ENCODE measurements at regions of chr15 and their contacts with region 1.

Region 1: GRCh38 chr15:74460871-74461846 is at the start of gene UBL7:
- DNase-seq: peak; percentile 99
- H3K4me3 Mint-ChIP-seq: peak within 1 kb of the TSS; percentile 94
- H3K27ac Mint-ChIP-seq: peak within 1 kb of the TSS; percentile 97
- H3K4me1 Mint-ChIP-seq: peaks cover 46% of the 10 kb centered on the region
- H3K27me3 Mint-ChIP-seq: no peaks in the 10 kb centered on the region
- total RNA-seq, gene UBL7: 43.0 to 47.0 TPM

Region 2: DNA sequence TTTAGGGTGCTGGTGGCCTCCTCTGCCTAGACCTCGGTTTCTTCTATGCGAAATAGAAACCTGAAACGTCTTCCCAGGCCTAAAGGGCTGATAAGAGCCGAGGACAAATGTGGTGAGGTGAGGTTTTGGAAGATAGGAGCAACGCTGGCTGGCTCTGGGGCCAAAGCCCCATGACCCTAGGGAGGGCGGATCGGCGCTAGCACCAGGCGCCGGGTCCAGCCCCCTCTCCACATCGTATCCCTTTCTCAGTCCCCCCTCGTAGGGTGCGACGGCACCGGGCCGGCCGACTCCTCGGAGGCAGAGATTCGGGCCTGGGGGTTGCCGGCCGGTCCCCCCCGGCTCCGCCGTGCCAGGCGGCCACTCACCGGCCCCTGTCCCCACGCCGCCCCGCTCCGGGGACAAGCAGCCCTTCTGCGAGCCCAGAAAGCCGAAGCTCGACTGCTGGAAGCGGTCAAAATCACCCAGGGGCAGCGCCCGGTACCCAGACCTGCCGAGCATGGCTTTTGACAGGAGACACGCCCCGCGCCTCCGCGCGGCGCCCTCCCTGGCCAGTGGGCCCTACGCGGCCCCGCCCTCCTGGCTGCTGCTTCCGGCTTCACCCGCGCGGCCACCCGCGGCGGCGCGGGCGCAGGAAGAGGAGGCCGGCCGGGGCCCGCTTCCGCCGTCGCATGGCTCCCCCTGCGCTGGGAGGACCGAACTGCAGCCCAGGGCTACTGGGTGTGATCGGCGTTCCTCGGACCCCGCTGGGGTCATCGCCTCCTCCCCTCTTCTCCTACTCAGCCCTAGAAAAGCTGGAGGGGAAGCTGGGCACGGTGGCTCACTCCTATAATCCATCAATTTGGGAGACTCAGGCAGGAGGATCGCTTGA is 469.2 kb before region 1 on chr15 and contains the start of gene STOML1:
- CTCF ChIA-PET with region 1: no interaction called
- intact Hi-C with region 1: loop called (anchors 2 kb)
- DNase-seq: peak; percentile 95
- H3K4me3 Mint-ChIP-seq: peak within 1 kb of the TSS; percentile 95
- H3K27ac Mint-ChIP-seq: peak within 1 kb of the TSS; percentile 83
- H3K4me1 Mint-ChIP-seq: peaks cover 49% of the 10 kb centered on the region
- H3K27me3 Mint-ChIP-seq: no peaks in the 10 kb centered on the region
- total RNA-seq, gene STOML1: 8.7 to 9.5 TPM

Region 3: DNA sequence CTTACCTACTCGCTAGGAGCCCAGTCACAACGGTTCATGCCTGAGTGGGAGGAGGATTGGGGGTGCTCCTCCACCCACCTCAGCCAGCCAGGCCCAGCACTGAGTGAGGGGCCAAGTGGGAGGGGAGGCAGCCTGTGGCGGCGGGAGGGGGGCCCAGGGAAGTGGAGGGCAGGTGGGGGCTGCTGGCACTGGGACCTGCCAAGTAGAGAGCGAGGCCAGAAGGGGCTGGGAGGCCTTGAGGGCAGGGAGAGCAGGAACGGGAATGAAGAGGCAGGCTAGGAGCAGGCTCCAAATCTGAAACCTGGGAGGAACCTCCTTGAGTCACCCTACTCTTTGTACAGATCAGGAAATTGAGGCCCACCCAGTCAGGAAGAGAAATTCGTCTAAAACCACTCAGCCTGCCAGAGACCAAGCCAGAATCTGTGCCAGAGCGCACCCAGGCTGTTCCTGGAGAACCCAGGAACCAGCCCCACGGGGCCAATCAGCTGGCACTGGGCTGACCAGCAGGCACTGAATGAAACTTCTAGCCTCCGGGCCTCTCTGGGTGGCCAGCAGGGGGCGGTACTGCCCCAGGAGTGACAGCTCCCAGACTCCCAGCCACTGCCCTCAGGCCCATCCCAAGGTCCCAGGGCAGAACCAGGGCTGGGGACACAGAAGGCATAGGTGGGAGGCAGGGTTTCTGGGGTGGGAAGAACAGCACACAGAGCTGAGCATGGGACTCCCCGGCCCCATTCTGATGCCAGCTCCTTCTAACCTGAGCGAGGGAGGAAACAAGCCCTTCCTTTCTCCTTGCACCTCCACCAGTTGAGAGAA is 78.9 kb before region 1 on chr15:
- CTCF ChIA-PET with region 1: interaction called, 4 read pairs
- intact Hi-C with region 1: loop called (anchors 1 kb)
- DNase-seq: peak; percentile 82
- H3K4me3 Mint-ChIP-seq: no peak overlapping the region
- H3K27ac Mint-ChIP-seq: peak overlapping the region; percentile 99
- H3K4me1 Mint-ChIP-seq: peaks cover 79% of the 10 kb centered on the region
- H3K27me3 Mint-ChIP-seq: no peaks in the 10 kb centered on the region

Region 4: GRCh38 chr15:74433592-74434262 is 27.4 kb before region 1 on chr15 and contains the start of gene SEMA7A:
- CTCF ChIA-PET with region 1: interaction called, 3 read pairs
- intact Hi-C with region 1: loop called (anchors 1 kb)
- DNase-seq: peak; percentile 87
- H3K4me3 Mint-ChIP-seq: peak within 1 kb of the TSS; percentile 90
- H3K27ac Mint-ChIP-seq: peak within 1 kb of the TSS; percentile 88
- H3K4me1 Mint-ChIP-seq: peaks cover 72% of the 10 kb centered on the region
- H3K27me3 Mint-ChIP-seq: no peaks in the 10 kb centered on the region
- total RNA-seq, gene SEMA7A: 45.7 to 46.9 TPM

Region 5: GRCh38 chr15:74449643-74450205 is 11.4 kb before region 1 on chr15:
- CTCF ChIA-PET with region 1: no interaction called
- intact Hi-C with region 1: no loop called
- DNase-seq: no peak
- H3K4me3 Mint-ChIP-seq: no peak overlapping the region
- H3K27ac Mint-ChIP-seq: no peak overlapping the region
- H3K4me1 Mint-ChIP-seq: peaks cover 4% of the 10 kb centered on the region
- H3K27me3 Mint-ChIP-seq: no peaks in the 10 kb centered on the region

Region 6: DNA sequence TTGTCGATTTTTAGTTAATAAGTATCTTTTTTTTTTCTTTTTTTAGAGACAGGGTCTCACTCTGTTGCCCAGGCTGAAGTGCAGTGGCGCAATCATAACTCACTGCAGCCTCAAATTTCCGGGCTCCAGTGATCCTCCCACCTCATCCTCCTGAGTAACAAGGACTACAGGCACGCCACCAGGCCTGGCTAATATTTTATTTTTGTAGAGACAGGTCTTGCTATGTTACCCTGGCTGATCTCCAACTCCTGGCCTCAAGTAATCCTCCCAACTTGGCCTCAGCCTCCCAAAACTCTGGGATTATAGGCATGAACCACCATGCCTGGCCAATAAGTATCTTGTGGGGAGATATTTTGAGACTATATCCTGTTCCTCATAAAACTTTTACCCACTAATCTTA is 50.4 kb after region 1 on chr15:
- CTCF ChIA-PET with region 1: no interaction called
- intact Hi-C with region 1: no loop called
- DNase-seq: no peak
- H3K4me3 Mint-ChIP-seq: no peak overlapping the region
- H3K27ac Mint-ChIP-seq: no peak overlapping the region
- H3K4me1 Mint-ChIP-seq: peaks cover 5% of the 10 kb centered on the region
- H3K27me3 Mint-ChIP-seq: no peaks in the 10 kb centered on the region

Region 7: DNA sequence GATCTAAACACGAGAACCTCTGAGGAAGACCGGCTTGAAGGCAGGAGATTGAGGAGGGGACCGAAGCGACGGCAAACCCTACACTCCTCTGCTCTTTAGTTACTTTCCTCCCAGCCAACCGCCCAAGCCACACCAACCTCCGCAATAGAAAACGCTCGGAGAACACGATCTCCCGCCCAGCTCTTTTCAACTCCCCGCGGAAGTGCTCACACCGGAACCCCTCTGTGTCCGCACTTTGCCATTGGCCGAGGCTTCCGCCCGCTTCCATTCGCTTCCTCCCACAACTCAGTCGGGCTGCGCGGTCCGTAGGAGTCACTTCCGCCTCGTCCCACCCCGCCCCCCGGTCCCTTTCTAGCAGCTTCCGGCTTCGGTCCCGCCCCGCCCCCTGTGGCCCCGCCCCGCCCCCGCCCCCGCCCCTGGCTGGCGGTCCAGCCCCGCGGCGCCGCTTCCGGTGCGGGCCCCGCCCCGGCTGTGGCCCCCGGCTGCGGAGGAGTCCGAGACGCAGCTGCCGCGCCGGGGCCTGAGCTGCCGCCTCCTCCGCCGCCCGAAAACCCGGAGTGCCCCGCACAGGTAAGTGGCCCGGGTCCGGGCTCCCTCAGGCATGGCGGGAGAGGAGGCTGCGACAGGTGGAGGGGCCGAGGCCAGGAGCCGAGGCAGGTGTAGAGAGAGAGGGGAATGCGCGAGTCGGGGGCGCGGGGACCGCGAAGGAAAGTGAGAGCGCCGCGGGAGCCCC is 79.8 kb after region 1 on chr15 and contains the start of gene ARID3B:
- CTCF ChIA-PET with region 1: interaction called, 4 read pairs
- intact Hi-C with region 1: loop called (anchors 1 kb)
- DNase-seq: peak; percentile 99
- H3K4me3 Mint-ChIP-seq: peak within 1 kb of the TSS; percentile 97
- H3K27ac Mint-ChIP-seq: peak within 1 kb of the TSS; percentile 90
- H3K4me1 Mint-ChIP-seq: peaks cover 46% of the 10 kb centered on the region
- H3K27me3 Mint-ChIP-seq: no peaks in the 10 kb centered on the region
- total RNA-seq, gene ARID3B: 14.2 to 15.9 TPM

Region 8: GRCh38 chr15:74615508-74616365 is 154.6 kb after region 1 on chr15 and contains the start of gene CLK3:
- CTCF ChIA-PET with region 1: interaction called, 3 read pairs
- intact Hi-C with region 1: loop called (anchors 1 kb)
- DNase-seq: peak; percentile 97
- H3K4me3 Mint-ChIP-seq: peak within 1 kb of the TSS; percentile 90
- H3K27ac Mint-ChIP-seq: peak within 1 kb of the TSS; percentile 95
- H3K4me1 Mint-ChIP-seq: peaks cover 39% of the 10 kb centered on the region
- H3K27me3 Mint-ChIP-seq: no peaks in the 10 kb centered on the region
- total RNA-seq, gene CLK3: 124 TPM

Region 9: GRCh38 chr15:74842581-74843444 is 381.7 kb after region 1 on chr15 and contains the start of gene ULK3:
- CTCF ChIA-PET with region 1: no interaction called
- intact Hi-C with region 1: loop called (anchors 10 kb)
- DNase-seq: peak; percentile 93
- H3K4me3 Mint-ChIP-seq: peak within 1 kb of the TSS; percentile 86
- H3K27ac Mint-ChIP-seq: peak within 1 kb of the TSS; percentile 89
- H3K4me1 Mint-ChIP-seq: peaks cover 44% of the 10 kb centered on the region
- H3K27me3 Mint-ChIP-seq: no peaks in the 10 kb centered on the region
- total RNA-seq, gene ULK3: 58.9 to 69.2 TPM

Measured in activated naive CD4-positive, alpha-beta T cell treated with anti-CD3 and anti-CD28 coated beads for 36 hours (primary cell).